ENCODE measurements at regions of chr19 and their contacts with region 1.

Region 1: GRCh38 chr19:54430306-54431254 is 15.3 kb downstream of the TTYH1 start:
- H3K4me3 ChIP-seq: peak overlapping the region; percentile 41
- H3K27ac ChIP-seq: no peak overlapping the region
- H3K4me1 ChIP-seq: peaks cover 10% of the 10 kb centered on the region
- CTCF ChIP-seq: peak; percentile 45; the same call in 1 of the 2 replicates

Region 2: DNA sequence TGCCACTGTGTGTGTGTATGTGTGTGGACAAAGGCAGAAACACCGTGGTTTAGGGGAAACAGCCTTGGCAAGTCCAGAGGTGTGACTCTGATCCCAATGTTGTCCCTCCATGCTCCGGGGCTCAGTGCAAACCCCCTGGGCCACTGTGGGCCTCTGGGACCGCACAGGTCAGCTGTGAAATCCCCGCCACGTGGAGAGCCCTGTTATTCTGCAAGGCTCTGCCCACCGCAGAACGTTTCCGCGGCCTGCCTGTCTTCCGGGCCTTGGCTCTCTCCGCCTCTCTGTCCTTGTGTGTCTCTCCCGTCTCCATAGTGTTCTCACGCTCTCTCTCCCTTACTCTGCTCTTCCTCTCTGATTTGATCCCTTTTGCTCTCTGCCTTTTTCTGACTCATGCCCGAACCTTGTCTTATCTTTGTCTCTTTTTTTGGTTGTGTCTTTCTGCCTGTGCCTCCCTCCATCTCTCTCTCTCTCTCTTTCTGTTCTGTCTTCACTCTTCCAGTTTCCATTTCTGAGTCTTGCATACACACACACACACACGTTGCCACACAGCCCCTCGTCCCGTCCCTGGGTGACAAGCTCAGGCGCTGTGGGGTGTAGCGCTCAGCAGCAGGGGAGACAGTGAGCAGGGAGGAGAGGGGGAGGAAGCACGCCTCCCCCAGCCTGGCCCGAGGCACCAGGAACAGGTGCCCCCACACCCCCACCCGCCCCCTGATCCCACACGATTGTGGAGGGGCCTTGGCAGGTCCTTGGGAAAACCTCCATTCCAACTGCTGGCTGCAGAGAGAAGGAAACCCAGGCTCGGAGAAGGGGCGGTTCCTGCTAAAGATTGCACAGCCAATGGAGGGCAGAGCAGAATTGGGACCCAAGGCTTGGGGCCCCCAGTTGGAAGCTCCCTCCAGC is 12.3 kb before region 1 on chr19:
- CTCF ChIA-PET with region 1: interaction called, 10 read pairs
- POLR2A ChIA-PET with region 1: interaction called, 10 read pairs
- H3K4me3 ChIP-seq: no peak overlapping the region
- H3K27ac ChIP-seq: no peak overlapping the region
- H3K4me1 ChIP-seq: no peaks in the 10 kb centered on the region; the same call in 1 of the 2 replicates
- CTCF ChIP-seq: no peak

Region 3: DNA sequence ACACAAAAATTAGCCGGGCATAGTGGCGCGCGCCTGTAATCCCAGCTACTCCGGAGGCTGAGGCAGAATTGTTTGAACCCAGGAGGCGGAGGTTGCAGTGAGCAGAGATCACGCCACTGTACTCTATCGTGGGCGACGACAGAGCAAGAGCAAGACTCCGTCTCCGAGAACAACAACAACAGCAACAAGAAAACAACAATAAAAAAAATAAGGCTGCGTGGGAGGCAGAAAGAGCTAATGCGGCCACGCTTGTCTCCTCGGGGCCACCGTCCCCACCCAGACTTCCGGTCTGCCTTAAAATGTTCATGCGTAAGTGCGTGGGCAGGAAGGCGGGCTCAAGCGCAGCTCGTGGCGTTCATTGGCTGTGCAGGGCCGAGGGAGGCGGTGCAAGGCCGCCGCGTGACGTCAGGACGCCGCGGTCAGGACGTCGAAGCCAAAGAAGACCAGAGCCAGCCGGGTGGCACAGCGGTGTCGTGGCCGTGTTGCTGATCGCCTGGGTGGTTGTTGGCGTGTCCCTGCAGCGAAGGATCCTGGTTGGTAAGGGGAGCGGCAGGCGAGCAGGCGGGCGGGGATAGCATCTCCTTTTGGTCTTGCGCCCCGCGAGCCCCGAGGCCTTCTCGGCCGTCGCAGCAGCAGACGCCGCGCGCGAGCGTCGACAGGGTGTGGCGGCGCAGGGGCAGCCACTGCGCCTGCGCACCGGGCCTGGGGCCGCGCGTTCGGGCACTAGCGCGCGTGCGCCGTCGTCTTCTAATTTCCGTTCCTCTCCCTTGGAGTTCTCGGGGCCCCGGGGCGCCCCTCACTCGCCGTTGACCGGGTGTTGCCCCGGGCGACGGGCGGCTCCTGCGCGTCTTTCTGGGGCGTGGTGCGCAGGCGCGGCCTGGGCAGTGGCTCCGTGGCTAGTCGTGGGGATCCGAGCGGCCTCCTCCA is 18.5 kb after region 1 on chr19 and contains the start of gene LENG8:
- CTCF ChIA-PET with region 1: interaction called, 7 read pairs
- POLR2A ChIA-PET with region 1: interaction called, 47 read pairs
- H3K4me3 ChIP-seq: peak within 1 kb of the TSS; percentile 96
- H3K27ac ChIP-seq: peak within 1 kb of the TSS; percentile 90
- H3K4me1 ChIP-seq: peaks cover 29% of the 10 kb centered on the region
- CTCF ChIP-seq: peak; percentile 23; the same call in 1 of the 2 replicates

Measured in HEK293 (cell line).